Dorsolateral prefrontal cortex (tissue), 120 donors: ENCODE measurements at regions of chr12 and their contacts with region 1.

Region 1: GRCh38 chr12:2034633-2035430 is 18.0 kb upstream of the CACNA1C start:
- DNase-seq: peak; percentile 76 to 92 (median 87)
- H3K4me3 ChIP-seq: peak overlapping the region; percentile 38 to 77 (median 61)
- H3K27ac ChIP-seq: peak overlapping the region in 54 of 59 donors; percentile 5 to 85 (median 66)
- H3K27me3 ChIP-seq: no peaks in the 10 kb centered on the region
- CTCF ChIP-seq: peak; percentile 67 to 98 (median 93)

Region 2: DNA sequence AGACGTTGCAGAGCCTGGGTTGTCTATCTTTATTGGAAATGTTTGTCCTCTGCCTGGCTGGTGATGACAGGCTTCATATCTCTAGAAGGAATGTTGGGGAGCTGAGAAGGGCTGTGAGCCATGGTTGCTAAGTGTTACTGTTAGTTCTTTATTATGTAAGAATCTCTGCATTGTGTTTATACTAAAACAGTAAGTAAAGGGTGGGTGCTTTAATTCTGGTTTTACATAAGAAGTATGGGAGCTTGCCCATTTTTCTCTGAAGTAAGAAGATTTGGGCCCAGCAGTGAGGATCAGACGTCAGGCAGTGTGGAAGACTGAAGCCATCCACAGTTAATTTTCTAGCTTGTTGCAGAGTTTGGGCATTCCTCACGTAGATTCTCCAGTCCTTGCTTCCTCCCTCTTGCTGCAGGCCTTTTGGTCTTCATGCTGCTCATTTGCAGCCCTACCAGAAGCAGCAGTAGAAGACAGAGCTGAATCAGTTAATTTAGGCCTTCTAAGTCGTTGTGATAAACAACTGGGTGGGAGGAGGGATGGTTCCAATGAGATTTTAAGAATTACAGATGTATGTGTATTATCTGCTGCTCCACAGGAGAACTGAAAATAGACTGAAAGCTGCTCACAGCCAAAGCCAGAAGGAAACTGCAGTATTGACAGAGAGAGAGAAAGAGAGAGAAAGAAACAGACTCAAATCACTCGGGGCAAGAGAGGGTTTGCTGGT is 384.4 kb before region 1 on chr12:
- intact Hi-C with region 1: loop called in 1 of 2 experiments (anchors 10 kb)
- DNase-seq: peak in 1 of 10 donors; percentile 48
- H3K4me3 ChIP-seq: no peak overlapping the region
- H3K27ac ChIP-seq: peak overlapping the region; percentile 13 to 100 (median 83)
- H3K27me3 ChIP-seq: no peaks in the 10 kb centered on the region
- CTCF ChIP-seq: no peak

Region 3: DNA sequence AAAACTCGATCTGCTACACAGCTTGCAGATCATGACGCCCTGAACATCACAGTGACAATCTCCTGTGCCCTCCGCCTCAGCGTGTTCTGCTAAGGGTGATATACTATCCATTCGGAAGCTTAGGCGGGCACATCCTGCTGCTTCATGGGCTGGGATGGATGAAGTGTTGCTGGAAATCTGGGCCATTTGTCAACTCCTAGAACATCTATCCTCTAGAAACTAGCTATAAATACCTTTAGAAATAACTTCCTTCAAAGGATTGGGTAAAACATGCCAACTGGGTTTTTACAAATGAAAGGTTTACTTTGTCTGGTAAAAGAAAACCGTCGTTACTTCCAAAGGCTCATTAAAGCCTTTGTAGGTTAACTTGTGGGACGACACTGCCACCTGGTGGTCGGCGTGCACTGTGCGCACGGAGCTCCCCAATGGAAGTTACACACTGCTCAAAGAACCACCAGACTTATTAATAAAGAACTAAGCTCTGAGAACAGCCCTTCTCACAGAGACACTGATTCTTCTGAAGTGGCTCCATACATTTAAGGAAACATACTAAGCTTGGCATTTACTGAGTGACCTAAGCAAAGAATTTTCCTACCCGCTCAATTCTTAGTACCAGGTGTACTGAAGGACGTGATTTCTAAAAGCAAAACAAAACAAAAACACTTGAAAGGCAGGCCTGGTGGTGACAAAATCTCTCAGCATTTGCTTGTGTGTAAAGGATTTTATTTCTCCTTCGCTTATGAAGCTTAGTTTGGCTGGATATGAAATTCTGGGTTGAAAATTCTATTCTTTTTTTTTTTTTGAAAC is 94.8 kb before region 1 on chr12:
- intact Hi-C with region 1: loop called (anchors 5 to 10 kb)
- DNase-seq: peak; percentile 83 to 97 (median 89)
- H3K4me3 ChIP-seq: peak overlapping the region in 31 of 59 donors; percentile 2 to 46 (median 18)
- H3K27ac ChIP-seq: peak overlapping the region; percentile 14 to 100 (median 83)
- H3K27me3 ChIP-seq: no peaks in the 10 kb centered on the region
- CTCF ChIP-seq: peak; percentile 94 to 100 (median 99)

Region 4: GRCh38 chr12:2004113-2004929 is 30.5 kb before region 1 on chr12 and contains the start of gene DCP1B:
- intact Hi-C with region 1: loop called (anchors 1 to 2 kb)
- DNase-seq: peak; percentile 94 to 98 (median 98)
- H3K4me3 ChIP-seq: peak within 1 kb of the TSS; percentile 62 to 100 (median 89)
- H3K27ac ChIP-seq: peak within 1 kb of the TSS in 58 of 59 donors; percentile 57 to 97 (median 91)
- H3K27me3 ChIP-seq: no peaks in the 10 kb centered on the region
- CTCF ChIP-seq: peak in 49 of 56 donors; percentile 12 to 60 (median 35)
- total RNA-seq, gene DCP1B: 11.4 to 20.4 (median 14.9) TPM

Region 5: GRCh38 chr12:2057041-2057794 is 22.4 kb after region 1 on chr12:
- intact Hi-C with region 1: loop called (anchors 1 to 2 kb)
- DNase-seq: peak in 8 of 10 donors; percentile 45 to 69 (median 63)
- H3K4me3 ChIP-seq: peak overlapping the region in 50 of 59 donors; percentile 2 to 85 (median 41)
- H3K27ac ChIP-seq: peak overlapping the region in 17 of 59 donors; percentile 0 to 65 (median 32)
- H3K27me3 ChIP-seq: no peaks in the 10 kb centered on the region
- CTCF ChIP-seq: peak; percentile 25 to 82 (median 69)

Region 6: GRCh38 chr12:2198005-2198501 is 163.2 kb after region 1 on chr12:
- intact Hi-C with region 1: no loop called
- DNase-seq: peak in 8 of 10 donors; percentile 42 to 78 (median 60)
- H3K4me3 ChIP-seq: peak overlapping the region in 4 of 59 donors; percentile 4 to 16 (median 8)
- H3K27ac ChIP-seq: peak overlapping the region in 39 of 59 donors; percentile 7 to 80 (median 46)
- H3K27me3 ChIP-seq: no peaks in the 10 kb centered on the region
- CTCF ChIP-seq: no peak

Region 7: DNA sequence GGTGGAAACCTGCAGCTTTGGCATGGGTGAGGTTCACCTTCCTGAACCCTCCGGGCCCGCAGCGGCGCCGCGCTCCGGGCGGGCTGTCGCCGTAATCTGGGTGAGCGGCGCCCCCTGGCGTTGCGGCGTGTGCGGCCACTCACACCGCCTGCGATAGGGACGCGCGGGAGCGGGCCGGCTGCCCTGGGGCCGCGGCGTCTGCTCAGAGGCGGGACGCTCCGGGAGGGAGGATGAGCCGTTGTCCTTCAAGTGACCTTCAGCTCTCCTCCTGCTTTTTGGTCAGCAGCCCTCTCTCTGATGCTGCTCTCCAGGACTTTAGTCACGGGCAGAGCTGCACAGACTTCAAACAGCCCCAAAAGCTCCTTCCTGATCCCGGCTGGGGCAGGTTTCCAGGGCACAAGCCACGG is 548.3 kb after region 1 on chr12:
- intact Hi-C with region 1: loop called in 1 of 2 experiments (anchors 10 kb)
- DNase-seq: peak in 9 of 10 donors; percentile 38 to 77 (median 55)
- H3K4me3 ChIP-seq: peak overlapping the region in 45 of 59 donors; percentile 3 to 54 (median 33)
- H3K27ac ChIP-seq: peak overlapping the region in 11 of 59 donors; percentile 6 to 75 (median 40)
- H3K27me3 ChIP-seq: no peaks in the 10 kb centered on the region
- CTCF ChIP-seq: peak; percentile 52 to 92 (median 85)